Mucosa of descending colon (tissue), 3 donors: ENCODE measurements at regions of chr1 and their contacts with region 1.

Region 1: GRCh38 chr1:43073490-43074230 is 98.4 kb downstream of the EBNA1BP2 start:
- DNase-seq: peak in 2 of 3 donors; percentile 61 to 84
- ATAC-seq: peak; percentile 95
- H3K4me3 ChIP-seq: no peak overlapping the region
- H3K4me1 ChIP-seq: no peaks in the 10 kb centered on the region
- CTCF ChIP-seq: no peak

Region 2: DNA sequence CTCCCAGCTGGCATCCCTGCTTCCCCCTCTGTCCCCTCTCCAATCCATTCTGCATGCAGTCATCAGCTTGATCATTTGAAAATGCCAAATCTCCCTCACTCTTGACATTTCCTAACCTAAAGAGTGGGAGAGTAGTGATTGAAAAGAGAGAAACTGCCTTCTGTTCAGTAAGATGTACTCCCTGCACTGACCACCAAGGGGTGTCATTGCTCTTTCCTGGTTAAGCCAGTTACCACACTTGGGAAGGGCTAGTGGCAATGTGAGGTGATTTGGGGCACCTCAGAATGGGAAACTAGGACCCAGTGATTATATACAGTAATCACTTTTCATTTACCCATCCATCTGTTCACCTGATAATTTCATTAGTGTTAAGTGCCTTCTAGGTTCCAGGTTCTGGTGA is 295.8 kb before region 1 on chr1:
- intact Hi-C with region 1: loop called in 1 of 2 experiments (anchors 10 kb)
- DNase-seq: peak in 1 of 3 donors; percentile 49
- ATAC-seq: peak; percentile 59
- H3K4me3 ChIP-seq: no peak overlapping the region
- H3K4me1 ChIP-seq: no peaks in the 10 kb centered on the region
- CTCF ChIP-seq: no peak

Region 3: DNA sequence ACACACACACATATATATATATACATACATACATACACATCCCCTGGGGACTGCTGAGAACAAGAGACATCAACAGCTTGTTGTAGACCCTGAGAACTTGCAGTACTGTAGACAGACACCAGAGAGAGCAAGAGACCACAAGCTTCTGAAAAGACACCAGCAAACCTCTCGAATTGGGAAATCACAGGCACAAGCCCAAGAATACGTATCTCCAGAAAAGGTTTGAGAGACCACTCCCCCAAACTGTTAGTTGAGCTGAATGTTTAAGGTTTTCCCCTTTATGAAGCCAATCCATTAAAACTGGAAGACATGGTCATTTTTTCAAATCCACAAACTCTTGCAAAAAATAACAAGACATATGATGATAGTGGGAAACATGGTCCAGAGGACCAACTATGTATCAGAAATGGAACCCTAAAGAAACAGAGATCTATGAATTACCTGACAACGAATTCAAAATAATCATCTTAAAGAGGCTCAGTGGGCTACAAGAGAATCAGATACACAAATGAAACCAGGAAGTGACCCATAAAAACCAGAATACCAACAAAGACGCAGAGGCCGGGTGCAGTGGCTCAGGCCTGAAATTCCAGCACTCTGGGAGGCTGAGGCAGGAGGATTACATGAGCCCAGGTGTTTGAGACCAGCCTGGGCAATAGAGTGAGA is 160.1 kb before region 1 on chr1:
- intact Hi-C with region 1: loop called (anchors 2 kb)
- DNase-seq: peak in 1 of 3 donors; percentile 86
- ATAC-seq: peak; percentile 88
- H3K4me3 ChIP-seq: no peak overlapping the region
- H3K4me1 ChIP-seq: no peaks in the 10 kb centered on the region
- CTCF ChIP-seq: peak; percentile 47

Region 4: GRCh38 chr1:42979896-42980800 is 93.5 kb before region 1 on chr1:
- intact Hi-C with region 1: no loop called
- DNase-seq: peak in 2 of 3 donors; percentile 60 to 65
- ATAC-seq: peak; percentile 93
- H3K4me3 ChIP-seq: no peak overlapping the region
- H3K4me1 ChIP-seq: no peaks in the 10 kb centered on the region
- CTCF ChIP-seq: no peak